Heart left ventricle (tissue), 16 donors: ENCODE measurements at regions of chr18 and their contacts with region 1.

Region 1: DNA sequence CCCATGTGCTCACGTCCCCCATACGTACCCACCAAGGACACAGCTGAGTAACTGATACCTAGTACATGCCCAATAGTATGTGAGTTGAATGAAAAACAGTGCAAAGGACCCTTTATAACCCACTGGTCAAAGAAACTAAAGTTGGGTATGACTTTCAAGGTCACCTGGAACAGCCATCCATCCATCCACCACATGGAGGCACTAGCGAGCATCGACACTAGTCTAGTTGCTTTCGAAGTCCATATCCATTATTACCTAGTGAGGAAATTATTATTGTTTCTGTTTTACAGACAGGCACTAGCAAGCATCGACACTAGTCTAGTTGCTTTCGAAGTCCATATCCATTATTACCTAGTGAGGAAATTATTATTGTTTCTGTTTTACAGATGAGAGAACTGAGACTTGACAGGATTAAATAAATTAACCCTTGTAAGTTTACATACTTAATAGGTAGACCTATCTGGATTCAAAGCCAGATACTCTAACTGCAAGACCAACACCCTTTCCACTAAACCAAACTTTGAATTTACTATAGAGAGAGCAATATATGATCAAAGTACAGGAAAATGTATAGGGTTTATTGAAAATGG is 233.7 kb downstream of the METTL4 start:
- DNase-seq: peak in 1 of 5 donors; percentile 23
- ATAC-seq: no peak
- H3K4me3 ChIP-seq: no peak overlapping the region
- H3K27ac ChIP-seq: no peak overlapping the region
- H3K4me1 ChIP-seq: no peaks in the 10 kb centered on the region
- H3K27me3 ChIP-seq: no peaks in the 10 kb centered on the region
- CTCF ChIP-seq: peak; percentile 19 to 59 (median 44)
- POLR2A ChIP-seq: no peak

Region 2: DNA sequence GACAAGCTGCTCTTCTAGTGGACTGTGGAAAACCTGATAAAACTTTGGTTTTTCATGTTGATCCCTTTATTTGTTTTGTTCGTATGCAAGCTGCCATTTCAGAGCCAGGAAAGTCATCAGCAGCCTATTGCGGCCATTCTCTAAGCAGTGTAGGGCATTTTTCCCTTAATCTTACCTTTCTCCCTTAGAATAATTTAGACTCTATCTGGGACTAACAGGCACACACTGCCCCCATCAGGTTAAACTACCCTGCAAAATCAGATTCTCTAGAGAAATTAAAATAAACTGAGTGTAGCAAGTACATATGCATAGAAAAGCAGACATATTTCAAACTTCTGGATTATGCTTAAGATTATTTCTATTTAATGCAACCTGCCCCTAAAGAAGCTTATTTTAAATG is 113.8 kb before region 1 on chr18:
- intact Hi-C with region 1: no loop called
- DNase-seq: peak in 1 of 5 donors; percentile 26
- ATAC-seq: peak in 3 of 4 donors; percentile 45 to 70 (median 46)
- H3K4me3 ChIP-seq: peak overlapping the region in 9 of 12 donors; percentile 16 to 43 (median 24)
- H3K27ac ChIP-seq: no peak overlapping the region
- H3K4me1 ChIP-seq: no peaks in the 10 kb centered on the region
- H3K27me3 ChIP-seq: peaks cover 0 to 4% (median 0%) of the 10 kb centered on the region in 9 donors
- CTCF ChIP-seq: peak; percentile 32 to 68 (median 53)
- POLR2A ChIP-seq: no peak

Region 3: GRCh38 chr18:2536493-2536892 is 198.8 kb after region 1 on chr18:
- intact Hi-C with region 1: loop called in 6 of 10 experiments (anchors 5 to 10 kb)
- DNase-seq: no peak
- ATAC-seq: peak in 1 of 4 donors; percentile 32
- H3K4me3 ChIP-seq: no peak overlapping the region
- H3K27ac ChIP-seq: no peak overlapping the region
- H3K4me1 ChIP-seq: no peaks in the 10 kb centered on the region
- H3K27me3 ChIP-seq: no peaks in the 10 kb centered on the region
- CTCF ChIP-seq: no peak
- POLR2A ChIP-seq: no peak

Region 4: DNA sequence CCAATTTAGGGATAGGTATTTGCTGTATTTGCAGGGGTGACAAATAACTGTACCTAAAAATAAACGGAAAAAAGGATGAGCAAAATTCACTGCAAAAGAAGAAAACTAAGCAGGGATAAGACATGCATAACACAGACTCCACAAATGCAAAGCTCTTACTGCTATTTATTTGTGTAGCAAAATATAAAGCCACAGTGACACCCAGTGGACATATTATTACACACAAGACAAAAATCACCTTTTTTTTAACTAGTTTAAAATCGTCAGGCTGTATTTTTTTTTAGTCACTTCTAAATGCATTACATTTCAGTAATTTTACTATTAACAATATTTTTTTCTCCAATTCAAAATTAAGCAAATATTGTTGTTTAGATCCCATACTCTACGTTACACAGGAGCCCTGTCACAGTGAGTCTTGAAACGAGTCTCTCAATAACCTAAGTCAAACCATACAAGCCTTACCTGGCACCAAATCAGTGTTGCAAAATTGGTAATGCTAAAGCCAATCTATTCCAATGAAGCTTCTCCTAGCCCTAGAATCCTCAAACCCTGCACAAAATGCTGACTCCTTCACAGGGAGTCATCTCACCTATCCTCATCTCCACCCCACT is 209.9 kb after region 1 on chr18:
- intact Hi-C with region 1: loop called in 8 of 10 experiments (anchors 5 to 10 kb)
- DNase-seq: no peak
- ATAC-seq: no peak
- H3K4me3 ChIP-seq: no peak overlapping the region
- H3K27ac ChIP-seq: no peak overlapping the region
- H3K4me1 ChIP-seq: no peaks in the 10 kb centered on the region
- H3K27me3 ChIP-seq: no peaks in the 10 kb centered on the region
- CTCF ChIP-seq: peak; percentile 38 to 71 (median 53)
- POLR2A ChIP-seq: no peak